Uterus (tissue), 4 donors: ENCODE measurements at regions of chr3 and their contacts with region 1.

Region 1: GRCh38 chr3:189430166-189430947 is 200.8 kb upstream of the TP63 start:
- DNase-seq: no peak
- H3K4me3 ChIP-seq: no peak overlapping the region
- H3K27ac ChIP-seq: no peak overlapping the region
- H3K4me1 ChIP-seq: no peaks in the 10 kb centered on the region
- H3K27me3 ChIP-seq: no peaks in the 10 kb centered on the region
- CTCF ChIP-seq: no peak
- POLR2A ChIP-seq: no peak

Region 2: GRCh38 chr3:189458532-189458931 is 28.2 kb after region 1 on chr3:
- intact Hi-C with region 1: loop called (anchors 1 kb)
- DNase-seq: no peak
- H3K4me3 ChIP-seq: no peak overlapping the region
- H3K27ac ChIP-seq: no peak overlapping the region
- H3K4me1 ChIP-seq: no peaks in the 10 kb centered on the region
- H3K27me3 ChIP-seq: no peaks in the 10 kb centered on the region
- CTCF ChIP-seq: no peak
- POLR2A ChIP-seq: no peak